ENCODE measurements at regions of chr6 and their contacts with region 1.

Region 1: DNA sequence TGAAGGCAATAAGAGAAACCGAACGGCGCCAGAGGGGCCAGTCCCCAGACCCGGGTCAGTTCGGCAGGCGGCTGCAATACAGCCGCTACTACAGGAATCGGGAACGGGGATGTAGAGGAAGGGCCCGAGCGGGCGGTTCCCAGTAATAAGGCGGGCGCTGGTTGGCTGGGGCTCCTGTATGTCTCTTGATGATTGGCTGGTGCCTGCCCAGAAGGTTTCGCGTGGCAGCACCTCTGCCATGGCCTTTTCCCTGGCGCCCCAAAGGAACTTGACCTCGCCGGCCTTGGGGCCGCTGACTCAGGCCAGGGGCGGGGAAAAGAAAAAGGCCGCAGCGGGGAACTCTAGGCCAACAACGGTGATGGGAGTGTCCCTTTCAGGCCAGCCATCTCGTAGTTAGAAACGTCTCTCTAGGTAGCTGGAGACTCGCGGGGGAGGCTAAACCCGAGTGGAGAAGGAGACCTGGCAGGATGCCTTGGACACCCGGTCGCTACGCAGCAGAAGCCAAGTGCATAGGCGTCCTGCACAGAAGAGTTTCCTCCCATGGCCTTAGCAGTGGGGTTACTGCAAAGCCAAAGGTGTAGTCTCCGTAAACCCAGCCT is at the start of gene IBTK:
- DNase-seq: peak; percentile 84 to 97 (median 90)
- ATAC-seq: peak; percentile 85
- H3K4me3 ChIP-seq: peak within 1 kb of the TSS; percentile 93 to 98
- H3K4me3 Mint-ChIP-seq: peak within 1 kb of the TSS; percentile 98
- H3K27ac ChIP-seq: peak within 1 kb of the TSS; percentile 82 to 86
- H3K27ac Mint-ChIP-seq: peak within 1 kb of the TSS; percentile 97
- H3K4me1 ChIP-seq: peaks cover 24% of the 10 kb centered on the region
- H3K4me1 Mint-ChIP-seq: peaks cover 39% of the 10 kb centered on the region
- H3K27me3 ChIP-seq: no peaks in the 10 kb centered on the region
- H3K27me3 Mint-ChIP-seq: peaks cover 2% of the 10 kb centered on the region
- CTCF ChIP-seq: no peak
- total RNA-seq, gene IBTK: 9.7 to 9.9 TPM

Region 2: DNA sequence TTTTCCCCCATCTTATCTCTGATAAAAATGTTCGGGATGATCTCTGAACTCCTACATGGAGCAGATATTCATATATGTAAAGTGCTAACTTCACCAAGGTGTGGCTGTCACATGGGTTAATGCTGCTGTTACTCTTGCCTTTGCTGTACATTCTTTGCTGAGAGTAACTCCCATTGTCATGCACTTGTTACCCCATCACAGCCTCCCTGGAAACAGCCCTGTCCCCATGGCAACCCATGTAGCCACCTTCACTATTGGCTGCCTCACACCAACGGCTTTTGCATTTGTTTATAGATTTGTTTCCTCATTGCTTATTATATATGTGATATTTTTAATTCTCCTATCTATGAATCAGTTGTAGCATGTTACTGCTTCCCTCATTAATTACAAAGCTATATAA is 17.1 kb after region 1 on chr6:
- CTCF ChIA-PET with region 1: no interaction called
- POLR2A ChIA-PET with region 1: no interaction called
- intact Hi-C with region 1: no loop called
- DNase-seq: no peak
- ATAC-seq: no peak
- H3K4me3 ChIP-seq: no peak overlapping the region
- H3K4me3 Mint-ChIP-seq: no peak overlapping the region
- H3K27ac ChIP-seq: no peak overlapping the region
- H3K27ac Mint-ChIP-seq: no peak overlapping the region
- H3K4me1 ChIP-seq: no peaks in the 10 kb centered on the region
- H3K4me1 Mint-ChIP-seq: no peaks in the 10 kb centered on the region
- H3K27me3 ChIP-seq: peaks cover 0 to 4% of the 10 kb centered on the region in 2 experiments
- H3K27me3 Mint-ChIP-seq: peaks cover 4% of the 10 kb centered on the region
- CTCF ChIP-seq: no peak

Region 3: DNA sequence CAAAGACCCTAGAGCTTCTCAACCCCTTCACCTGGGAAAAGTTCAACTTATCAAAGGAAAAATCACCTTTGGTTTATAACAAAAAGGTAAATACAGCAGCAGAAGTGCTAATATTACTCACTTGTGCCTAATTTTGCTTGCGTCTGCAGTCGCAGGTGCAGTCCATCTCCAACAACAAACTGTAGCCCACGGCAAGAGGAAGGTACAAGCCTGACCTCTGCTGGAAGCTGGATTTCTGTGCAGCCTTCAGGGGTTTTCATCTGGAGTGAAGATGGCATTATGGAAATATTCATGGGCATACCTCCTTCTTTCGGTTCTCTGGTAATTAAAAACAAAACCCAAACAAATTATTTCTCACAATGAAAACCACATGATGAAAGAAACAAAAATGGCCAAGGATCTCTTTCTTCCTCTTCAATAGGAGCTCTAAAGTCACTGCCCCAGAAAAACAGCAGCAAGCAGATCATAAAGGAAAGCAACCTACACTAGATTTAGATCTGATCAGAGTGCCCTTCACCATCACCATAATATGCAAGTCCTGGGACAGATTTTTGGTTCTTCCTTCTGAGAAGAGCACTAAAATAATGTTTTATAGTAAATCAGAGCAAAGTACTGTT is 810.1 kb after region 1 on chr6:
- CTCF ChIA-PET with region 1: interaction called, 3 read pairs
- POLR2A ChIA-PET with region 1: no interaction called
- intact Hi-C with region 1: loop called in 1 of 2 experiments (anchors 2 kb)
- DNase-seq: peak in 3 of 9 experiments; percentile 14 to 39 (median 28)
- ATAC-seq: no peak
- H3K4me3 ChIP-seq: no peak overlapping the region
- H3K4me3 Mint-ChIP-seq: no peak overlapping the region
- H3K27ac ChIP-seq: no peak overlapping the region
- H3K27ac Mint-ChIP-seq: no peak overlapping the region
- H3K4me1 ChIP-seq: no peaks in the 10 kb centered on the region
- H3K4me1 Mint-ChIP-seq: peaks cover 27% of the 10 kb centered on the region
- H3K27me3 ChIP-seq: no peaks in the 10 kb centered on the region
- H3K27me3 Mint-ChIP-seq: no peaks in the 10 kb centered on the region
- CTCF ChIP-seq: no peak

Region 4: GRCh38 chr6:83192871-83193746 is 945.4 kb after region 1 on chr6 and contains the starts of genes PGM3 and RWDD2A:
- CTCF ChIA-PET with region 1: interaction called, 3 read pairs
- POLR2A ChIA-PET with region 1: no interaction called
- intact Hi-C with region 1: loop called (anchors 2 to 5 kb)
- DNase-seq: peak; percentile 74 to 95 (median 90)
- ATAC-seq: peak; percentile 97
- H3K4me3 ChIP-seq: peak within 1 kb of the TSS; percentile 82 to 84
- H3K4me3 Mint-ChIP-seq: peak within 1 kb of the TSS; percentile 99
- H3K27ac ChIP-seq: peak within 1 kb of the TSS; percentile 51 to 82
- H3K27ac Mint-ChIP-seq: peak within 1 kb of the TSS; percentile 98
- H3K4me1 ChIP-seq: peaks cover 14% of the 10 kb centered on the region
- H3K4me1 Mint-ChIP-seq: peaks cover 53% of the 10 kb centered on the region
- H3K27me3 ChIP-seq: no peaks in the 10 kb centered on the region
- H3K27me3 Mint-ChIP-seq: no peaks in the 10 kb centered on the region
- CTCF ChIP-seq: no peak
- total RNA-seq, gene PGM3: 25.8 to 26.4 TPM
- total RNA-seq, gene RWDD2A: 2.1 to 2.2 TPM

Region 5: GRCh38 chr6:83859410-83860358 is 1612.0 kb after region 1 on chr6 and contains the start of gene CYB5R4:
- CTCF ChIA-PET with region 1: no interaction called
- POLR2A ChIA-PET with region 1: no interaction called
- intact Hi-C with region 1: loop called (anchors 5 to 10 kb)
- DNase-seq: peak; percentile 87 to 97 (median 93)
- ATAC-seq: peak; percentile 96
- H3K4me3 ChIP-seq: peak within 1 kb of the TSS; percentile 69 to 78
- H3K4me3 Mint-ChIP-seq: peak within 1 kb of the TSS; percentile 95
- H3K27ac ChIP-seq: peak within 1 kb of the TSS; percentile 83 to 86
- H3K27ac Mint-ChIP-seq: peak within 1 kb of the TSS; percentile 91
- H3K4me1 ChIP-seq: peaks cover 18% of the 10 kb centered on the region
- H3K4me1 Mint-ChIP-seq: peaks cover 41% of the 10 kb centered on the region
- H3K27me3 ChIP-seq: no peaks in the 10 kb centered on the region
- H3K27me3 Mint-ChIP-seq: peaks cover 12% of the 10 kb centered on the region
- CTCF ChIP-seq: peak; percentile 52
- total RNA-seq, gene CYB5R4: 15.9 to 17.7 TPM